Heart right ventricle (tissue), 16 donors: ENCODE measurements at regions of chr15 and their contacts with region 1.

Region 1: GRCh38 chr15:83848315-83849050 is 194.6 kb downstream of the ADAMTSL3 start:
- DNase-seq: no peak
- ATAC-seq: peak in 7 of 8 donors; percentile 44 to 70 (median 60)
- H3K4me3 ChIP-seq: no peak overlapping the region
- H3K27ac ChIP-seq: peak overlapping the region in 9 of 10 donors; percentile 6 to 77 (median 57)
- H3K4me1 ChIP-seq: peaks cover 0 to 59% (median 32%) of the 10 kb centered on the region in 9 donors
- H3K27me3 ChIP-seq: no peaks in the 10 kb centered on the region
- CTCF ChIP-seq: no peak

Region 2: GRCh38 chr15:83283138-83283812 is 565.2 kb before region 1 on chr15:
- intact Hi-C with region 1: no loop called
- DNase-seq: peak; percentile 18 to 40
- ATAC-seq: peak in 7 of 8 donors; percentile 62 to 76 (median 70)
- H3K4me3 ChIP-seq: peak overlapping the region; percentile 35 to 63 (median 54)
- H3K27ac ChIP-seq: peak overlapping the region in 2 of 10 donors; percentile 10 to 22
- H3K4me1 ChIP-seq: peaks cover 0 to 18% (median 13%) of the 10 kb centered on the region in 9 donors
- H3K27me3 ChIP-seq: peaks cover 5 to 88% (median 74%) of the 10 kb centered on the region in 7 donors
- CTCF ChIP-seq: no peak

Region 3: GRCh38 chr15:83475551-83475950 is 372.9 kb before region 1 on chr15:
- intact Hi-C with region 1: no loop called
- DNase-seq: no peak
- ATAC-seq: no peak
- H3K4me3 ChIP-seq: no peak overlapping the region
- H3K27ac ChIP-seq: no peak overlapping the region
- H3K4me1 ChIP-seq: no peaks in the 10 kb centered on the region
- H3K27me3 ChIP-seq: peaks cover 0 to 25% (median 0%) of the 10 kb centered on the region in 7 donors
- CTCF ChIP-seq: no peak

Region 4: DNA sequence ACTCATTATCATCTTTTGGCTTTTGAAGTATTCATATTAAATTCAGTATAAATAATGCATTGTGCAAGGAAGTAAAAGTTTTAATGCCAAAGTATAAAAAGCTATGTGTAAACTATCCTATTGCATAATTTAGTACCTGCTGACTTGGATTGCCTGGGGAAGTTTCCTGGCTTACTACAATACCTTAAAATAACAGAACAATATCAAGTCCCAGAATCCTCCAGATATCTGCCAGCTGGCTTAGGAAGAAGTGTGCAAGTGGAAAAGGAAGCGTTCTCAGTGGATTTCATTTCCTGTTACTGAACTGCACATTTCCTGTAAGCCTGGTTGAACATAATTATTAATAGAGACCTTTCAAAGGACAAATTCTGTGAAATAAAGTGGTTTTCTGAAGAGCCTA is 42.1 kb after region 1 on chr15:
- intact Hi-C with region 1: loop called in 1 of 10 experiments (anchors 10 kb)
- DNase-seq: peak in 1 of 2 donors; percentile 14
- ATAC-seq: peak; percentile 53 to 93 (median 84)
- H3K4me3 ChIP-seq: peak overlapping the region in 1 of 10 donors; percentile 13
- H3K27ac ChIP-seq: peak overlapping the region in 6 of 10 donors; percentile 7 to 63 (median 34)
- H3K4me1 ChIP-seq: peaks cover 0 to 28% (median 14%) of the 10 kb centered on the region in 9 donors
- H3K27me3 ChIP-seq: no peaks in the 10 kb centered on the region
- CTCF ChIP-seq: no peak

Region 5: DNA sequence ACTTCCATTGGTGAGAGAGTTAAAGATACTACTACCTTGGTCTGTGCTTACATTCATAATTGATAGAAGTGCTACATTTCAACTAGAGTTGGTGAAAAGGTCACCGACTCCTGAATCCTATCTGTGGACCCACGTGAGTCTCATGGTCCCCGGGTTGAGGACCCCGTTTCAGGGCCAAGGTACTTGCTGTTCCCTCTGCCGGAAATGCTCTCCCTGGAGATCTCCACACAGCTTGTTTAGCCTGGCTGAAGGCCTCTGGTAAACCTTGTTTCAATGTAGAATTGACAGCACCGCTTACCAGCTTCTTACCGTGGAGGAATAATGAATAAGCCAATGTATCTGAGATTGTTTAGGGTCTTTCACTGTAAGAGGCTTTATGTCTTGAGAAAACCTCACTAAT is 161.1 kb after region 1 on chr15:
- intact Hi-C with region 1: loop called in 1 of 10 experiments (anchors 10 kb)
- DNase-seq: peak; percentile 8 to 13
- ATAC-seq: peak in 3 of 8 donors; percentile 71 to 81 (median 74)
- H3K4me3 ChIP-seq: no peak overlapping the region
- H3K27ac ChIP-seq: no peak overlapping the region
- H3K4me1 ChIP-seq: no peaks in the 10 kb centered on the region
- H3K27me3 ChIP-seq: no peaks in the 10 kb centered on the region
- CTCF ChIP-seq: no peak

Region 6: GRCh38 chr15:84079885-84080777 is 231.6 kb after region 1 on chr15:
- intact Hi-C with region 1: no loop called
- DNase-seq: peak; percentile 3 to 19
- ATAC-seq: peak in 7 of 8 donors; percentile 25 to 71 (median 49)
- H3K4me3 ChIP-seq: peak overlapping the region; percentile 25 to 60 (median 50)
- H3K27ac ChIP-seq: no peak overlapping the region
- H3K4me1 ChIP-seq: peaks cover 0 to 12% (median 9%) of the 10 kb centered on the region in 9 donors
- H3K27me3 ChIP-seq: peaks cover 0 to 73% (median 58%) of the 10 kb centered on the region in 7 donors
- CTCF ChIP-seq: no peak